Naive thymus-derived CD4-positive, alpha-beta T cell (primary cell): ENCODE measurements at regions of chr17 and their contacts with region 1.

Region 1: DNA sequence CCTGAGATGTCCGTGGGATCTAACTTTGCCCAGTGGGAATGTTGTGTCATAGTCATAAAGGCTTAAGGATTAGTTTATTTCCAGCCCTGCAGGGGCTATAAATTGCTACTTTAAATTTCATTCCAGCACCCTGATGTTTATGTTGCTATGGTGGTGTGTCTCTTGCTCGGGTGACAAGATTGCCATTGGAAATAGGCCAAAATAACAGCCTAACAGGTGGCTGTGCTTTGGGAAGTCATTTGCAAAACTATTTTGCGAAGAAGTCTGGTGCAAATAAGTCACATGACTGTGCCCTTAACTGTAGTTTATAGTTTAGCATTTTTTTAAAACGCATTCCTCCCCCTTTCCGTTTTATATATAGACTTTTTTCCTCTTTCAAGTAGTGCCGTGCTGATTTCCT is 23.1 kb downstream of the PITPNC1 start:
- DNase-seq: peak in 6 of 9 donors; percentile 64 to 80 (median 76)
- ATAC-seq: peak; percentile 62
- H3K4me3 ChIP-seq: peak overlapping the region; percentile 32
- H3K4me3 Mint-ChIP-seq: peak overlapping the region; percentile 66 to 93 (median 83)
- H3K27ac ChIP-seq: peak overlapping the region; percentile 83
- H3K27ac Mint-ChIP-seq: peak overlapping the region; percentile 82 to 100 (median 99)
- H3K4me1 ChIP-seq: peaks cover 9 to 77% of the 10 kb centered on the region in 2 donors
- H3K4me1 Mint-ChIP-seq: peaks cover 32 to 88% (median 77%) of the 10 kb centered on the region in 7 donors
- H3K27me3 ChIP-seq: no peaks in the 10 kb centered on the region
- H3K27me3 Mint-ChIP-seq: no peaks in the 10 kb centered on the region

Region 2: GRCh38 chr17:67413388-67413787 is 13.2 kb after region 1 on chr17:
- CTCF ChIA-PET with region 1: interaction called, 3 read pairs
- POLR2A ChIA-PET with region 1: interaction called, 5 read pairs
- intact Hi-C with region 1: loop called in 1 of 2 experiments (anchors 2 kb)
- DNase-seq: no peak
- ATAC-seq: no peak
- H3K4me3 ChIP-seq: no peak overlapping the region
- H3K4me3 Mint-ChIP-seq: peak overlapping the region in 4 of 10 donors; percentile 6 to 48 (median 37)
- H3K27ac ChIP-seq: peak overlapping the region; percentile 27
- H3K27ac Mint-ChIP-seq: peak overlapping the region in 8 of 9 donors; percentile 16 to 85 (median 72)
- H3K4me1 ChIP-seq: peaks cover 8 to 23% of the 10 kb centered on the region in 2 donors
- H3K4me1 Mint-ChIP-seq: peaks cover 19 to 98% (median 81%) of the 10 kb centered on the region in 7 donors
- H3K27me3 ChIP-seq: no peaks in the 10 kb centered on the region
- H3K27me3 Mint-ChIP-seq: no peaks in the 10 kb centered on the region

Region 3: DNA sequence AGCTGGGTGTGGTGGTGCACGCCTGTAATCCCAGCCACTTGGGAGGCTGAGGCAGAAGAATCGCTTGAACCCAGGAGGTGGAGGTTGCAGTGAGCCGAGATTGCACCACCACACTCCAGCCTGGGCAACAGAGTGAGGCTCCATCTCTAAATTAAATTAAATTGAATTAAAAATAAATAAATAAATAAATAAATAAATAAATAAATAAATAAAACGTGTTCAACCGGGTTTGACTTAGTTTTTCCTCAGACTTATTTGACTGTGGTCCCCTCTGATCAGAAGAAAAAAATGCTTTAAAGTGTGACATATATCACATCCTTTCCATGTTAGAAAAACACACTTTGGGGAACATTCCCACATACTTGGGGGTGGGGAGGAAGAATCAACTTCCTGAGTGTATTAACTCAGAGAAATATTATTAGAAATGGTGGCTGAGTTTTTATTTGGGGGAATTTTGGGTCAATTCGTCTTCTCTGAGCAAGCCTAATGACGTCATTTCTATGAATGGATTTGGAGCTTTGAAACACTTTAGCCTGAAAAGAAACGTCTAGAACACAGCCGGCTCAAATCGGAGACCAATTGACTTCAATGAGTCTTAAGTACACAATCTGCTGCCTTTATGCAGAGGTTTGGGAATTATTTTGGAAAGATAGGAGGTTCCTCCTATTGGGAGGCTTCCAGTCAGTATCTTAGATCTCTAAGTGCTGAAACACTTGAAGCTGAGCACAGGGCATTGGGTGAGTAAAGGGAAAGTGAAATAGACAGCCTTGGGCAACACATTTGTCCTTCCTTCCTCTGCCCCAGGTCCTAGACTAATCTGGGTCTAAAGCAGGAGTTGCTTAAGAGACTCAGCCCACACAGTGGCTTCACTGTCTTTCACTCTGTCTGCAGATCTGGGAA is 109.4 kb after region 1 on chr17:
- CTCF ChIA-PET with region 1: no interaction called
- POLR2A ChIA-PET with region 1: no interaction called
- intact Hi-C with region 1: no loop called
- DNase-seq: no peak
- ATAC-seq: peak; percentile 76
- H3K4me3 ChIP-seq: no peak overlapping the region
- H3K4me3 Mint-ChIP-seq: no peak overlapping the region
- H3K27ac ChIP-seq: no peak overlapping the region
- H3K27ac Mint-ChIP-seq: peak overlapping the region in 4 of 9 donors; percentile 3 to 70 (median 58)
- H3K4me1 ChIP-seq: no peaks in the 10 kb centered on the region
- H3K4me1 Mint-ChIP-seq: peaks cover 7 to 68% (median 60%) of the 10 kb centered on the region in 7 donors
- H3K27me3 ChIP-seq: no peaks in the 10 kb centered on the region
- H3K27me3 Mint-ChIP-seq: no peaks in the 10 kb centered on the region